GM10248 (cell line): ENCODE measurements at regions of chr1 and their contacts with region 1.

Region 1: DNA sequence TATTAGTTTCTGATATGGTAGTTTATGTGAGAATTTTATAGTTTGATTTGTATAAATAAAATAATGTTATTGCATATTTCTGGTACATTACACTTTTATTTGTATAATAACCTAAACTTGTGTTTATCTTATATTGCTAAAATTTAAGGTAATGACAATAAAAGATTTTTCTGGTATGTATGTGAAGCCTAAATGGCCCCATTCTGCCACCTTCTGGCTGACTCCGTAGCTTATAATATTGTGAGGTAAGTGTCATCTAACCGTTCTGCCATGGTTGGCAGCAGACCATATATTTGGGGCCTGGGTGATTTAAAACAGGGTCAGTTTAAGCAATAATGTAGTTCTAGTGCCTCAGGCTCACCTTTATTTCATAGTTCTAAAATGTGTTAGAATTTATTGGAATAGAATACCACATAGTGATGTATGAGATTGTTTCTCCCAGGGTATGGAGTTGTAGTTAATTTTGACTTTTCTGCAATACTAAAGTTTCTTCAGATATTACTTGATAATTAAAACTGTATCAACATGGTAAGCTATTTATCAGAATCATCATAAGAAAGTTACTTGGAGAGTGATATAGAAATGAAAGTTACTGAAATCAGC is 21.2 kb upstream of the PRKACB start:
- DNase-seq: peak; percentile 15
- CTCF ChIP-seq: peak; percentile 63

Region 2: DNA sequence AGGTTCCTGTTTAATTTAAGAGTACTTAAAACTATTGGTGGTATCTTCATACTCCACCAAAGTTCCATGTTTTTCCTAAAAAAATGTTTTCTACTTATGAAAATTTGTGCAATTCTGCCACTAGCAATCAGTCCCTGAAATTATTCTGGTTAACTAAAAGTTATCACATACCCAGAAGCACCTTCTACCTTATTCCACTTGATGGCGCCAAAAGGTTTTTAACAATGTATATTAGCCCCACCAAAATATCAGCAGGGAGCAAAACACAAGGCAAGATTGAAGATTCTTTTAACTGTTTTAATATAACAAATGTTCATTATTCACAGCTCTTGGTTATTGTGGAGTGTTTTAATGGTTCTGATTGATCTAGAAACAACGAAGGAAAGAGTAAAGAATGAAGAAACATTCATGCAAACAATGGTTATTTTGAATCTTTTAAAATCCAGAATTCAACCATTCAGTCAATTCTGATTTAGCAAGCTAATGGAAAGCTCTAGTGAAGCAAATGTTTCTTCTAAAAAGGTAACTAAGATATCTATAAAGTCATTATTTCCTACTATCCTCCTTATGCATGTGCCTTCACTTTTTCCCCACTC is 191.1 kb before region 1 on chr1:
- CTCF ChIA-PET with region 1: interaction called, 44 read pairs
- POLR2A ChIA-PET with region 1: no interaction called
- DNase-seq: peak; percentile 37
- CTCF ChIP-seq: peak; percentile 55

Region 3: DNA sequence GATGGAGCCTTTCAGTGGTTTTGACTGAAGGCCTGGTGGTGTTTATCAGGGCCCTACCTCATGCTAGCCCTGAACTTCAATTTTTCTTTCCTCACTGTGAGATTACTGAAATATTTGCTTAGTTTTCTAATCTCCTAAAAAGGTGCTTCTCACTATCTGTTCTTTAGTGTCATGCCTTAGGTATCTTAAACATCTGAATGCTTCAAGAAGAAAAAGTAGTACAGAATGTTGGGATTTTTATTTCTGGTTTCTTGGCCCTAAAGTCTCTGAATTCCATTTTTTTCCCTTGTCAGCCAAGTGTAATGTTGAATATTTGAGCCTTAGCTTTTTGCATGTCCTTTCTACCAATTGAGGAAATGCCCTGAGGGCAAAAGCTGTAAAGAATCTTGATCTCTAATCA is 26.7 kb before region 1 on chr1:
- CTCF ChIA-PET with region 1: no interaction called
- POLR2A ChIA-PET with region 1: no interaction called
- DNase-seq: no peak
- CTCF ChIP-seq: no peak

Region 4: DNA sequence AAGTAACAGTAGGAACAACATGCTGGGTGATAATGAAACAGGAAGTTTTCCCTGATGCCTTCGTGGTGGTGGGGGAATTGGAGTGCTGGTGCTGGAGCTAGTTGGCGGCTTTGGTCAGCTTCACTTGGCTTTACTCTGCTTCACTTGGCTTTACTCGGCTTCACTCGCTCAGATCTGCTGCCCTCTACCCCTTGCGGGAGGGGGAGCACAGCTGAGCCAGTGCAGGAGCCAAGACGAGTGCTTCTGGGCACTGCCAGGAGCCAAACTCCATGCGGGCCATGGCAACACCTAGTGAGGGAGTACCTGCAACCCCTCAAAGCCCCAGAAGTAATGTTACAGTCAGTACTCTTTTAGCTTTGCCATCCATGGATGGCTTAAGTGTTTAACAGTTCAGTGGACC is 10.6 kb after region 1 on chr1:
- CTCF ChIA-PET with region 1: interaction called, 11 read pairs
- POLR2A ChIA-PET with region 1: no interaction called
- DNase-seq: no peak
- CTCF ChIP-seq: no peak